ENCODE measurements at regions of chr1 and their contacts with region 1.

Region 1: GRCh38 chr1:68173911-68174737 is 58.2 kb downstream of the WLS start:
- DNase-seq: peak; percentile 98
- H3K4me3 ChIP-seq: peak overlapping the region in 1 of 3 experiments; percentile 41
- H3K27ac ChIP-seq: peak overlapping the region; percentile 93
- H3K4me1 ChIP-seq: peaks cover 66% of the 10 kb centered on the region
- H3K27me3 ChIP-seq: no peaks in the 10 kb centered on the region
- CTCF ChIP-seq: no peak
- POLR2A ChIP-seq: peak; percentile 60

Region 2: DNA sequence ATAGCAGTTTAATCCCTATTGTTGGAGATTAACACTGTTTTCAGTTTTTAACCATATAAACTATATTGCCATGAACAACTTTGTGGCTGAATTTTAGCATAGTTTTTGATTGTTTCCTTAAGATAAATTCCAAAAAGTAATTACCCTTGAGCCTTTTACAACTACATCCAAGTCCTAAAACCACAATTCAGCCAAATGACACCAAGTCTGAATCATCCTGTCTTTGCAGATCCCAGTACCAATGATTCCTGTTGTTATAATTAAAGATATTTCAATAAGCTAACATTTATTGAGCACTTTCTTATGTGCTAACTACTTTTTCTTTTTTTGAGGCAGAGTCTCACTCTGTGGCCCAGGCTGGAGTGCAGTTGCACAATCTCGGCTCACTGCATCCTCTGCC is 972.2 kb before region 1 on chr1:
- CTCF ChIA-PET with region 1: no interaction called
- POLR2A ChIA-PET with region 1: no interaction called
- dilution Hi-C with region 1: no loop called
- intact Hi-C with region 1: no loop called
- DNase-seq: no peak
- H3K4me3 ChIP-seq: no peak overlapping the region
- H3K27ac ChIP-seq: no peak overlapping the region
- H3K4me1 ChIP-seq: no peaks in the 10 kb centered on the region
- H3K27me3 ChIP-seq: peaks cover 1 to 2% of the 10 kb centered on the region in 2 experiments
- CTCF ChIP-seq: no peak
- POLR2A ChIP-seq: no peak

Region 3: GRCh38 chr1:67889953-67890567 is 284.1 kb before region 1 on chr1:
- CTCF ChIA-PET with region 1: no interaction called
- POLR2A ChIA-PET with region 1: no interaction called
- dilution Hi-C with region 1: no loop called
- intact Hi-C with region 1: loop called (anchors 10 kb)
- DNase-seq: peak; percentile 93
- H3K4me3 ChIP-seq: no peak overlapping the region
- H3K27ac ChIP-seq: peak overlapping the region; percentile 79
- H3K4me1 ChIP-seq: peaks cover 26% of the 10 kb centered on the region
- H3K27me3 ChIP-seq: no peaks in the 10 kb centered on the region
- CTCF ChIP-seq: no peak
- POLR2A ChIP-seq: no peak

Region 4: GRCh38 chr1:68206848-68207689 is 32.9 kb after region 1 on chr1:
- CTCF ChIA-PET with region 1: interaction called, 10 read pairs
- POLR2A ChIA-PET with region 1: interaction called, 10 read pairs
- dilution Hi-C with region 1: no loop called
- intact Hi-C with region 1: loop called (anchors 1 kb)
- DNase-seq: peak; percentile 93
- H3K4me3 ChIP-seq: peak overlapping the region in 1 of 3 experiments; percentile 40
- H3K27ac ChIP-seq: peak overlapping the region; percentile 91
- H3K4me1 ChIP-seq: peaks cover 34% of the 10 kb centered on the region
- H3K27me3 ChIP-seq: no peaks in the 10 kb centered on the region
- CTCF ChIP-seq: no peak
- POLR2A ChIP-seq: no peak

Region 5: GRCh38 chr1:68331117-68331865 is 157.2 kb after region 1 on chr1:
- CTCF ChIA-PET with region 1: no interaction called
- POLR2A ChIA-PET with region 1: interaction called, 5 read pairs
- dilution Hi-C with region 1: no loop called
- intact Hi-C with region 1: loop called (anchors 1 kb)
- DNase-seq: peak; percentile 87
- H3K4me3 ChIP-seq: no peak overlapping the region
- H3K27ac ChIP-seq: peak overlapping the region; percentile 30
- H3K4me1 ChIP-seq: peaks cover 29% of the 10 kb centered on the region
- H3K27me3 ChIP-seq: no peaks in the 10 kb centered on the region
- CTCF ChIP-seq: no peak
- POLR2A ChIP-seq: peak; percentile 26

Measured in endothelial cell of umbilical vein (primary cell).